ENCODE measurements at regions of chr6 and their contacts with region 1.

Region 1: DNA sequence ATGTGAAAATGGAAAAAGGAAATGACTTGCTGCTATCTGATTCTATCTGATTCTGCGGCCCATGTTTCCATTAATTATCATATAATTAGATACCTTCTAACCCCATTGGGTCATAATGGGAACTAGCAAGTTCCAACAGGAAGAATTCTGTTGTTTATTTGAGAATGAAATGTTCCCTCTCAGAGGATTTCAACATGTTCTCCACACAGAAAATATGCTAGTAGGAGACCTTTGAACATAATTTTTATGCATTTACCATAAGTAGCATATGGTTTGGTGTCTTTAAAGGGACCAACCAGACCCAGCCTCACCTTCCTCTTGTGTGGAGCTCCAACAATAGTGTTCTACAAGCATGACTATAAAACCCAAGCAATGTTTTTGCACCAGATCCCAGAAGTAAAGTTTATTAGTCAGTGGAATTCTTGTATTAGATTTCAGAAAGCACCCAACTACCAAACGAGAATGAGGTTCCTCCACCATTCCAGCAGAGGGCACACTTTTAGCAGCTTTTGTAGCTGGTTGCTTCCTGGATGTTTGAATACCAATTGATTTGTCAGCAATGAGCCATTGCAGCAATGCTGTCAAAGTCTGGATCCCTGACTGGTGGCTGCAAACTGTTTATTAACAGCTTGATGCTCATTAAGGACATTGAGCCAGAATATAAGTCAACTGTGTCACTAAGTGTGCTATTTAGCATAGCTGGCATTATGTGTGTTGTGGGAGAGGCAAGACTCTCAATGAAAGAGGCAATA is 143.6 kb upstream of the GJE1 start:
- DNase-seq: peak; percentile 78
- ATAC-seq: peak; percentile 87
- H3K4me3 ChIP-seq: no peak overlapping the region
- H3K27ac ChIP-seq: 0 out of 2 replicates have a peak overlapping the region, but pooled peaks have one; percentile 18
- H3K4me1 ChIP-seq: peaks cover 0 to 9% of the 10 kb centered on the region in 2 experiments; a peak in 3 of 4 replicates
- H3K27me3 ChIP-seq: no peaks in the 10 kb centered on the region
- CTCF ChIP-seq: peak; percentile 82 to 94 (median 87)
- POLR2A ChIP-seq: no peak
- RAD21 ChIP-seq: peak; percentile 97

Region 2: GRCh38 chr6:142045380-142046278 is 56.5 kb after region 1 on chr6:
- CTCF ChIA-PET with region 1: no interaction called
- POLR2A ChIA-PET with region 1: no interaction called
- RAD21 ChIA-PET with region 1: no interaction called
- intact Hi-C with region 1: loop called (anchors 2 kb)
- DNase-seq: peak; percentile 12
- ATAC-seq: peak; percentile 53
- H3K4me3 ChIP-seq: no peak overlapping the region
- H3K27ac ChIP-seq: no peak overlapping the region
- H3K4me1 ChIP-seq: no peaks in the 10 kb centered on the region
- H3K27me3 ChIP-seq: no peaks in the 10 kb centered on the region
- CTCF ChIP-seq: peak in 2 of 3 experiments; percentile 42 to 43; a peak in 3 of 6 replicates
- POLR2A ChIP-seq: no peak
- RAD21 ChIP-seq: peak; percentile 63

Measured in HCT116 (cell line).